ENCODE measurements at regions of chr15 and their contacts with region 1.

Region 1: GRCh38 chr15:81265944-81266775 is 57.8 kb downstream of the STARD5 start:
- DNase-seq: peak; percentile 88
- H3K4me3 Mint-ChIP-seq: peak overlapping the region; percentile 50
- H3K27ac Mint-ChIP-seq: peak overlapping the region; percentile 79
- H3K4me1 Mint-ChIP-seq: peaks cover 46% of the 10 kb centered on the region
- H3K27me3 Mint-ChIP-seq: peaks cover 7% of the 10 kb centered on the region

Region 2: GRCh38 chr15:80989518-80990478 is 276.4 kb before region 1 on chr15 and contains the start of gene MESD:
- CTCF ChIA-PET with region 1: interaction called, 11 read pairs
- POLR2A ChIA-PET with region 1: no interaction called
- DNase-seq: peak; percentile 97
- H3K4me3 Mint-ChIP-seq: peak within 1 kb of the TSS; percentile 98
- H3K27ac Mint-ChIP-seq: peak within 1 kb of the TSS; percentile 97
- H3K4me1 Mint-ChIP-seq: peaks cover 57% of the 10 kb centered on the region
- H3K27me3 Mint-ChIP-seq: no peaks in the 10 kb centered on the region
- total RNA-seq, gene MESD: 34.0 to 34.3 TPM

Region 3: DNA sequence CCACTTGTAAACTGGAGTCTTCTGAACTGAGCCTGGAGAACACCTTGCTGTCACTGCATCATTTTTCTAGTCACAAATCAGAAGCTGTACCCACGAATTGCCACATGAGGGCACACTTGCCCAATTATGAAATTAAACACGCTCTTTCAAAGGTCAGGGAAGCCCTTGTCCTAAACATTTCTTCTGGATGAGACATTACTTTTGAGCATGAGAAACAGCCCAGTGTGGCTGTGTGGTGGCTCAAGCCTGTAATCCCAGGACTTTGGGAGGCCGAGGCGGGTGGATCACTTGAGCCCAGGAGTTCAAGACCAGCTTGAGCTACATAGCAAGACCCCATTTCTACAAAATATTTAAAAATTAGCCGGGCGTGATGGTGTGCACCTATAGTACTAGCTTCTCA is 159.6 kb before region 1 on chr15:
- CTCF ChIA-PET with region 1: interaction called, 50 read pairs
- POLR2A ChIA-PET with region 1: no interaction called
- DNase-seq: peak; percentile 47
- H3K4me3 Mint-ChIP-seq: no peak overlapping the region
- H3K27ac Mint-ChIP-seq: no peak overlapping the region
- H3K4me1 Mint-ChIP-seq: no peaks in the 10 kb centered on the region
- H3K27me3 Mint-ChIP-seq: peaks cover 26% of the 10 kb centered on the region

Region 4: DNA sequence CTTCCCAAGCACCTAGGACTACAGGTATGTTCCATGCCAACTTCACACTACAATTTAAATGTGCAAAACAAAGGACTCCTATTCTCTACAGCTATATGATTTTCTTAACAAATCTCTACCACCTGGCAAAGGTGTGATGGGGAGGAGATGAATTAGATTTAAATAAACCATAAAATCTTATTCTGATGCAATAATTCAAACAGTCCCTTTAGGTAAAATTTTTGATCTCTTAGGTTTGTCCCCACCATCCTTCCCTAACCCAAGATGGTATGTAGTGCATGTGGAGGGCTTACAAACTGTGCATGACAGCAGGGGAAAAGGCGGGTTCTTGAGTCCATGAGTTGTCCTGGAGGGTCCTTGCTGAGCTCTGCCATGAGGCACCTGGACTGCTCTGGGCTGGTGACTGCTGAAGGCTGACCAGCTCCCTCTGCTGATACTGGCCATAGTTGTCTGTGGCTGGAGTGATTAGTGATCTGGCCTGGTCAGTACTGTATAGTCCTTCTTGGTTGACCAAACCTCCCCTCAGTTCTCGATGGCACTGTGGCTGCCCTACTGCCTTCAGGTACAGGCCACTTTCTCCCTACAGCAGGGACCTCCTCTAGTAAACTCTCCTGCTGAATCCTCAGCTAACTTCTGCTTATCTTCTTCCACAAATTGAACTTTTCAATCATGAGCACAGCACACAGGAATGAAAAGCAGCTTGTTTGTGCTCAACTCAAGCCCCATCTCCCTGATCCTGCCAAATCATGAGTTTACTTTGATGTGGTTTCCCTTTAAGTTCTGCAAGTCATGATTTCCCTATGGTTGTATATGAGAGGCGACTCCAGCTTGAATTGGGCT is 102.0 kb before region 1 on chr15:
- CTCF ChIA-PET with region 1: interaction called, 10 read pairs
- POLR2A ChIA-PET with region 1: no interaction called
- DNase-seq: no peak
- H3K4me3 Mint-ChIP-seq: no peak overlapping the region
- H3K27ac Mint-ChIP-seq: no peak overlapping the region
- H3K4me1 Mint-ChIP-seq: peaks cover 53% of the 10 kb centered on the region
- H3K27me3 Mint-ChIP-seq: peaks cover 7% of the 10 kb centered on the region

Region 5: DNA sequence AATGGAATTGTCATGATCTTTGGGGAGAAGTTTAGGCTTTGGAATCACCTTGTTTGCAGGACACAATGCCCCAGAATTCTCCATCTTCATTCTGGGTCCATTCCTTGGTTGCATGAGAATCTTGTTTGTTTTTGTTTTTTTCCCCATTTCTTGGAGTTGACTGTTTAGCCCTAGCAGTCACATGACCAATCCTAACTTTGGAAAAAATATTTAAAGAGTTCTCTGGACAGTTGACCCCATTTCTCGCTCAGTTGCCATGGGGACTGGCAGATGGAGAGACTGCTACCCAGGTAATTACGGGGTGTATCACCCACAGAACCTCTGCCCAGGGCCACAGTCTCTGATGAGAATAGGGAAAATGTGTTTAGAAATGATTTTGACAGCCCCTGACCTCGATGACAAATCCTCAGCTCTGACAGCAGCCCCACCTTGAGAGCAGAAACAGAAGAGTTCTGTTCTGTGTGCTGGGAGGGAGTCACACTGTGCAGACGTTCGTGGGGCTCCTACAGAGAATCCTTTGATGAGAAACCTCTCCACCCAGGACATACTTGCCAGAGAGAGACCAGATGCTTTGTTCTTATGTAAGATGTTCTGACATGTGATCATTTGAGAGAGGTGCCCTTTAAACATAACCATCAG is 11.8 kb before region 1 on chr15:
- CTCF ChIA-PET with region 1: interaction called, 14 read pairs
- POLR2A ChIA-PET with region 1: no interaction called
- DNase-seq: no peak
- H3K4me3 Mint-ChIP-seq: no peak overlapping the region
- H3K27ac Mint-ChIP-seq: no peak overlapping the region
- H3K4me1 Mint-ChIP-seq: peaks cover 4% of the 10 kb centered on the region
- H3K27me3 Mint-ChIP-seq: peaks cover 8% of the 10 kb centered on the region

Region 6: DNA sequence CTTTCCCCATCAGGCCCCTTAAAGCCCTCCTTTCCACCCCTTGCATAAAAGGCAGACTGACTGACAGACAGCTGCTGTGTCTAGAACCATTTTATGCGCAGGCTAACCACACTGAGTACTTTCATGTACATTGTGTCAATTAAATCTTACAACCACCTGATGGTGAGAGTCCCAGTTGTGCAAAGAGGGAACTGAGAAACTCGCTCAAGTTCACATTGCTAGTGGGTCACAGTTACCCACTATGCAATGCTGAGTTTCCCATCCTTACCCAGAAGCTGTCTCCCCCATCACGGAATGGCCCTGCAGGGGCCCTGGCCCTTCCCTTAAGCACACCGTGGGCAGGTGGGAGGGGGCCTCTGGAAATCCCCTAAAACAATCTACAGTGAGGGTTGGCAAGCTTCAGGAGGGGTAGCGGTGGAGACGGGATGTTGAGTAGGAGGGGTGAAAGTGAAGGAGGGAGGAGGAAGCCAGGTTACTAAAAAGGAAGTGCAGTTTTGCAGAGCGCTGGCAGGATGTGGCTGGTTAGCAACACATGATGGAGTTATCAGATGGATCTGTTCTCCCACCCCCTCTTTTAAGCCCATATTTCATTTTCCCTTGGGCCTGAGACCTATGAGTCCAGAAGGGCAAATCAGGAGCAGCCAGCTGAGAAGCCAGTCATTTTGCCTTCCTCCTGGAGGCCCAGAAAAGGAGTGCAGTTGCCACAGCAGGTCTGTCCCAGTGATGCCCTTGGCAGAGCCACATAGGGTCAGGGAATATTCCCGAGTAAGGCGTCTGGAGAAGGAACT is 27.8 kb after region 1 on chr15:
- CTCF ChIA-PET with region 1: interaction called, 23 read pairs
- POLR2A ChIA-PET with region 1: no interaction called
- DNase-seq: peak; percentile 85
- H3K4me3 Mint-ChIP-seq: peak overlapping the region; percentile 98
- H3K27ac Mint-ChIP-seq: peak overlapping the region; percentile 97
- H3K4me1 Mint-ChIP-seq: peaks cover 68% of the 10 kb centered on the region
- H3K27me3 Mint-ChIP-seq: no peaks in the 10 kb centered on the region

Measured in activated CD4-positive, alpha-beta T cell treated with anti-CD3 and anti-CD28 coated beads, Interleukin-2, amount 10 ng/mL, durations not matched to agents 7 days and 5 days (primary cell).